Dorsolateral prefrontal cortex (tissue), 120 donors: ENCODE measurements at regions of chr2 and their contacts with region 1.

Region 1: GRCh38 chr2:127874378-127875271 is 11.1 kb downstream of the AMMECR1L start:
- DNase-seq: no peak
- H3K4me3 ChIP-seq: no peak overlapping the region
- H3K27ac ChIP-seq: peak overlapping the region in 1 of 59 donors; percentile 37
- H3K27me3 ChIP-seq: no peaks in the 10 kb centered on the region
- CTCF ChIP-seq: no peak

Region 2: DNA sequence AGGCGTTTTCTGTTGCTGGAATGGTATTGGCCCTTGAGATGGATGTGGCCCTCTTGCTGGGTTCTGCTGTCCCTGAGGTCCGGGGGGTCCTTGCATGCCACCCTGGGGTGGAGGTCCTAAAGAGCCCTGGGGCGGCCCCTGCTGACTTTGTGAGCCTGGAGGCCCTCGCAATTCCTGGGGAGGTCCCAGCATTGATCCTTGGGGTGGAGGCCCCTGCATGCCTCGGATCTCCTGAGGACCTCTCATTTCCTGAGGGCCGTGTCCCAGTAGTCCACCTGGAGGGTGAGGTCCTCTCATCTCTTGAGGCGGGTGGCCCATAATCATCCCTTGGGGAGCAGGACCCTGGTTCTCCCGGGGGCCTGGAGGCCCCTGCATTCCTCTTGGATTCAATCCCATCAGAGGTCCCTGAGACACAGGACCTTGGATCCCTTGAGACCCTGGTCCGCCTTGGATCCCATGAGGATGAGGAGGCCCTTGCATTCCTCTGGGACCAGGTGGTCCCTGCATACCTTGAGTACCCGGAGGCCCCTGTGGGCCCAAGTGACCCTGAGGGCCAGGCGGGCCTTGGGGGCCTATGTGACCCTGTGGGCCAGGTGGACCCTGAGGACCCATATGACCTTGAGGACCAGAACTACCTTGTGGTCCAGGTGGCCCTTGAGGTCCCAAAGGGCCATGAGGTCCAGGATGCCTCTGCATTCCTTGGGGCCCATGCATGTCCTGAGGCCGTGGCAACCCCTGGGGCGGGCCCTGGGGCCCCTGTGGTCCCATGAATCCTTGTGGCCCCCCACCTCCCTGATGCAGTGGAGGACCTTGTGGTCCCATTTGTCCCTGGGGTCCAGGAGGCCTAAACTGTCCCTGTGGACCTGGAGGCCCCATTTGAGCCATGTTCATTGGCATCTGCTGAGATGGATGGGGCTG is 155.1 kb before region 1 on chr2:
- intact Hi-C with region 1: loop called in 1 of 2 experiments (anchors 10 kb)
- DNase-seq: no peak
- H3K4me3 ChIP-seq: no peak overlapping the region
- H3K27ac ChIP-seq: no peak overlapping the region
- H3K27me3 ChIP-seq: no peaks in the 10 kb centered on the region
- CTCF ChIP-seq: no peak

Region 3: GRCh38 chr2:128069769-128070168 is 195.1 kb after region 1 on chr2:
- intact Hi-C with region 1: no loop called
- DNase-seq: no peak
- H3K4me3 ChIP-seq: no peak overlapping the region
- H3K27ac ChIP-seq: no peak overlapping the region
- H3K27me3 ChIP-seq: no peaks in the 10 kb centered on the region
- CTCF ChIP-seq: no peak